ENCODE measurements at regions of chr18 and their contacts with region 1.

Region 1: GRCh38 chr18:864872-865273 is 39.8 kb upstream of the ADCYAP1 start:
- DNase-seq: peak; percentile 73 to 92 (median 78)
- ATAC-seq: peak; percentile 98
- H3K4me3 ChIP-seq: no peak overlapping the region
- H3K27ac ChIP-seq: no peak overlapping the region
- H3K4me1 ChIP-seq: 0 out of 5 replicates have a peak, but pooled peaks cover 0 to 3% of the 10 kb centered on the region in 2 experiments
- H3K27me3 ChIP-seq: peaks cover 8 to 17% of the 10 kb centered on the region in 2 experiments
- CTCF ChIP-seq: peak; percentile 97 to 99 (median 99)
- EP300 ChIP-seq: peak; percentile 13; the same call in 1 of the 2 replicates
- POLR2A ChIP-seq: no peak
- RAD21 ChIP-seq: peak; percentile 100

Region 2: DNA sequence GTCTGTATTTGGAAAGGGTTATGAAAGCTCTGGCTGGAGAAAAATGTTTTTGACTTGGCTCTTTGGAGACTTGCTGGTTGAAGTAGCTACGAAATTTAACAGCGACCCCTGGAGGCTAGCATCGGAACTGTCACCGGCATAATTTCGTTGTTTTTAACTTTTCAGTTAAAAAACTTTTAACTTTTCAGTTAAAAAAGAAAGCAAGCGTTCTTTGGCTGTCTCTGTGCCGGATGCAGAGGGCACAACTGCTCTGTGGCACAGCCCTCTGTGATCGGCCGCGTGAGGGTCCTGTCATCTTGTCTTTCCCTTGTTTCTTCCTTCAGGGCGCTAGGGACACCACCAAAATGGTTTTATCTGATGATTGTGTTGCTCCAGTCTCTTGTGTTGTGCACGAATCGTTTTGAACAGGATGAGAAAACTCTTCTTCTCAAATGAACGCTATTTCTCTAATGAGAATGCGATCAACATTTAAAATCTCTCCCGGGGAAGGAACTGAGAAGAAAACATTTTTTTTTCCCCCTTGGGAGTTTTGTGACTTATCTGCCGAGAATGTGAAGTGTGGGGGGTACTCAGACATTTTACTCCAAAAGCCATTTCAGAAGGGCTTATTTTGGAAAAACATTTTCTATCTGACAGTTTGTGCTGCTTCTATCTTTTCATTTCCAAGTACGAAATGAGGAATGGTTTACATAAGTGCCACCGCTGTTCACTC is 96.9 kb after region 1 on chr18:
- CTCF ChIA-PET with region 1: no interaction called
- POLR2A ChIA-PET with region 1: no interaction called
- in situ Hi-C with region 1: no loop called
- intact Hi-C with region 1: loop called (anchors 5 kb)
- DNase-seq: peak; percentile 59 to 64 (median 62)
- ATAC-seq: peak; percentile 61
- H3K4me3 ChIP-seq: peak overlapping the region; percentile 38
- H3K27ac ChIP-seq: peak overlapping the region; percentile 37; the same call in 1 of the 3 replicates
- H3K4me1 ChIP-seq: peaks cover 3 to 11% of the 10 kb centered on the region in 2 experiments; a peak in 4 of 5 replicates
- H3K27me3 ChIP-seq: peaks cover 0 to 7% of the 10 kb centered on the region in 2 experiments; a peak in 4 of 5 replicates
- CTCF ChIP-seq: peak; percentile 74 to 98 (median 94)
- EP300 ChIP-seq: no peak
- POLR2A ChIP-seq: no peak
- RAD21 ChIP-seq: peak; percentile 67 to 82

Region 3: DNA sequence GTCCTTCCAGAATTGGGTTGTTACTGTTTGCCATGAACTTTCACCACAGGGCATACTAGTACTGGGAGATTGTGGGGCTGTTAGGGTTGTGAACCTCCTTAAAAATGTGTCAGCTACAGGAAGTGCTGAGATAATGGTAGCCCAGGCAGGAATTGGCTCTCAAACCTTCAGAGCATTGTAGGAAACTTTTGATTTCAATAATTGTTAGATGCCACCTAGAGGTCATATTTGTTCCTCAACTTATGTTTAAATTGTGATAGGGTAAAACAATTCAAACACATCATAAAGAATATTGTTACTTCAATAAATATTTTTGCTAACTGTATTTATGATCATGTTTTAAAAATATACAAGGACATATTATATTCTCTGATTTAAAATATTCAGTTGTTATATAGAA is 634.4 kb after region 1 on chr18:
- CTCF ChIA-PET with region 1: no interaction called
- POLR2A ChIA-PET with region 1: no interaction called
- in situ Hi-C with region 1: no loop called
- intact Hi-C with region 1: loop called (anchors 10 kb)
- DNase-seq: peak in 2 of 4 experiments; percentile 16 to 20
- ATAC-seq: peak; percentile 65
- H3K4me3 ChIP-seq: no peak overlapping the region
- H3K27ac ChIP-seq: no peak overlapping the region
- H3K4me1 ChIP-seq: no peaks in the 10 kb centered on the region
- H3K27me3 ChIP-seq: no peaks in the 10 kb centered on the region
- CTCF ChIP-seq: peak in 2 of 3 experiments; percentile 34 to 46; a peak in 3 of 6 replicates
- EP300 ChIP-seq: no peak
- POLR2A ChIP-seq: no peak
- RAD21 ChIP-seq: peak; percentile 45 to 68

Region 4: DNA sequence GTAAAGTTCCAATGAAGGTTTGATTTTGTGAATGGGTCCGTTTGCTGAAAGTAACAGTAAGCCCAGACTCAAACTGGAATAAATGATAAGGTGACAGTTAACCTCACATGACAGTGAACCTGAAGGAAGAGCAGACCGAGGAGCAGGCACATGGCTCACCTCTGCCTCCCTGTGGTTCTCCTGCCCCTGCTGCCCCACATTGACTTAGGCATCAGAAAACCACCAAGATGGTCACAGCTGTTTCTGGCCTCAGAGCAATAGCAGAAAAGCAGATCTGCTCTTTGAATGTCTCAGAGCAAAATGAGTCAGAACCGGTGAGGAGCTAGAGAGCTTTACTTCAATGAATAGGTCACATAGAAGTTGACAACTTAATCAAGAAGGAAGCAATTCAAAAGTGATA is 1218.8 kb after region 1 on chr18:
- CTCF ChIA-PET with region 1: no interaction called
- POLR2A ChIA-PET with region 1: no interaction called
- in situ Hi-C with region 1: no loop called
- intact Hi-C with region 1: loop called (anchors 10 kb)
- DNase-seq: peak in 2 of 4 experiments; percentile 21 to 54
- ATAC-seq: peak; percentile 87
- H3K4me3 ChIP-seq: no peak overlapping the region
- H3K27ac ChIP-seq: no peak overlapping the region
- H3K4me1 ChIP-seq: no peaks in the 10 kb centered on the region
- H3K27me3 ChIP-seq: no peaks in the 10 kb centered on the region
- CTCF ChIP-seq: peak; percentile 54 to 78 (median 74)
- EP300 ChIP-seq: no peak
- POLR2A ChIP-seq: no peak
- RAD21 ChIP-seq: peak; percentile 75 to 78

Region 5: GRCh38 chr18:2554696-2555095 is 1689.8 kb after region 1 on chr18:
- CTCF ChIA-PET with region 1: no interaction called
- POLR2A ChIA-PET with region 1: no interaction called
- in situ Hi-C with region 1: loop called (anchors 5 kb)
- intact Hi-C with region 1: loop called (anchors 5 kb)
- DNase-seq: no peak
- ATAC-seq: no peak
- H3K4me3 ChIP-seq: no peak overlapping the region
- H3K27ac ChIP-seq: no peak overlapping the region
- H3K4me1 ChIP-seq: no peaks in the 10 kb centered on the region
- H3K27me3 ChIP-seq: no peaks in the 10 kb centered on the region
- CTCF ChIP-seq: no peak
- EP300 ChIP-seq: no peak
- POLR2A ChIP-seq: no peak
- RAD21 ChIP-seq: no peak

Measured in K562 (cell line).